Calu3 (cell line): ENCODE measurements at regions of chr1 and their contacts with region 1.

Region 1: GRCh38 chr1:107688354-107688753 is 276.6 kb downstream of the VAV3 start:
- DNase-seq: peak; percentile 44
- H3K4me3 Mint-ChIP-seq: peak overlapping the region; percentile 77
- H3K27ac Mint-ChIP-seq: peak overlapping the region; percentile 95
- H3K4me1 Mint-ChIP-seq: peaks cover 31% of the 10 kb centered on the region
- H3K27me3 Mint-ChIP-seq: no peaks in the 10 kb centered on the region
- CTCF ChIP-seq: no peak

Region 2: DNA sequence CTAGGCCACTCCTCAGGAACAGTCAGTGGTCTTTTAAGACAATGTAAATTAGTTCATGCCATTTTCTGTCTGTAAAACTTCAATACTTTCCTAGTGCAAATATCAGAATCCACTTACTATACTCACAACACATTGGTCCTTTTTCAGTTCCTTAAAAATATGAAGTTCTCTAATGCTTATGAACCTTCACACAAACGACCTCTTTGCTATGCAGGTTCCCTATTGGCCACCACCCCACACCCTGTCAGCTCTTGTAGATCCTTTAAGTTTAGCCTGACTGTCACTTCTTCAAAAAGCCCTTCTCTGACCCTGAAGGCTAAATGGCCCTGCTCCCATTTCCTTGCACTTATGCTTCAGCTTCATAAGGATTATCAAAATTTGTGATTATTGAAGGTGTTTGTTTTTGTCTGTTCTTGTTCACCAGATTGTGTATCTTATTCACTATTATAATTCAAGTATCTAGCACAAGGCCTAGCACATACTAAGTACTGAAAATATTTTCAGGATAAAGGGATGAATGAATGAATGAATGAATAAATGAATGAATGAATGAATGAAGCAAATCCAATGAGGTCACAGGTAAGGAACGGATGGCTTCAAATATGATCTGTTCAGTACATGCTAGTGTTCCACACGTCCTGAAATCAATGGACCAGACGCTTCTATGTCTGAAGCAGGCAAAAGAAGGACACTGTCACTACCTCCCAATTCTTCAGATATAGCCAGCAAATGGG is 97.3 kb before region 1 on chr1:
- CTCF ChIA-PET with region 1: no interaction called
- intact Hi-C with region 1: loop called (anchors 5 kb)
- DNase-seq: no peak
- H3K4me3 Mint-ChIP-seq: no peak overlapping the region
- H3K27ac Mint-ChIP-seq: no peak overlapping the region
- H3K4me1 Mint-ChIP-seq: peaks cover 26% of the 10 kb centered on the region
- H3K27me3 Mint-ChIP-seq: no peaks in the 10 kb centered on the region
- CTCF ChIP-seq: no peak

Region 3: GRCh38 chr1:107622966-107623365 is 65.4 kb before region 1 on chr1:
- CTCF ChIA-PET with region 1: no interaction called
- intact Hi-C with region 1: no loop called
- DNase-seq: no peak
- H3K4me3 Mint-ChIP-seq: no peak overlapping the region
- H3K27ac Mint-ChIP-seq: no peak overlapping the region
- H3K4me1 Mint-ChIP-seq: peaks cover 9% of the 10 kb centered on the region
- H3K27me3 Mint-ChIP-seq: no peaks in the 10 kb centered on the region
- CTCF ChIP-seq: no peak